GM12878 (cell line): ENCODE measurements at regions of chr2 and their contacts with region 1.

Region 1: GRCh38 chr2:172806493-172806892 is 70.8 kb downstream of the RAPGEF4 start:
- DNase-seq: no peak
- ATAC-seq: peak; percentile 44; the same call in 2 of the 3 replicates
- H3K4me3 ChIP-seq: no peak overlapping the region
- H3K27ac ChIP-seq: no peak overlapping the region
- H3K4me1 ChIP-seq: no peaks in the 10 kb centered on the region
- H3K27me3 ChIP-seq: no peaks in the 10 kb centered on the region; a peak in 1 of 4 replicates
- CTCF ChIP-seq: peak; percentile 66 to 84 (median 80); a peak in 5 of 6 replicates
- EP300 ChIP-seq: no peak
- POLR2A ChIP-seq: no peak
- RAD21 ChIP-seq: peak; percentile 89

Region 2: DNA sequence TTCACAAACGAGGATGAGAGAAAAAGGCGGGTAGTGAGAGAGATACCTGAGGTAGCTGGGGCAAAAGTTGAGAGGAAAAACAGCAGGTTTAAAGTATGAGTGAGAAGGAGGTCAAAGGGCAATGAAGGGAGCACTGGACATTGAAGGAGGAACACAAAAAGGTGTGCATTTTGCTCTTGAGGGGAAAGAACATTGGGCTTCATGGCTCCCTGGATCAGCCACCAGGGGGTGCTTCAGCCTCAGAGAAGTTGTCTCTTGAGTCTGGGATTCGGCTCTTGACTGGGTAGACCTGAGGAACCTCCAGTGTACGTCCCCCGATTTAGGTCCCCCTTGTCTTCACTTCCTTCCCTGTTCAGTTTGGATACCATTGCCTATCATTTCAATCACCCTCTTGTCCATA is 57.7 kb after region 1 on chr2:
- CTCF ChIA-PET with region 1: no interaction called
- POLR2A ChIA-PET with region 1: no interaction called
- RAD21 ChIA-PET with region 1: no interaction called
- SMC1A ChIA-PET with region 1: no interaction called
- in situ Hi-C with region 1: no loop called
- intact Hi-C with region 1: loop called (anchors 2 kb)
- DNase-seq: peak; percentile 3
- ATAC-seq: peak; percentile 86
- H3K4me3 ChIP-seq: no peak overlapping the region
- H3K27ac ChIP-seq: no peak overlapping the region
- H3K4me1 ChIP-seq: no peaks in the 10 kb centered on the region
- H3K27me3 ChIP-seq: peaks cover 0 to 4% of the 10 kb centered on the region in 2 experiments; a peak in 1 of 4 replicates
- CTCF ChIP-seq: peak; percentile 66 to 80 (median 77)
- EP300 ChIP-seq: no peak
- POLR2A ChIP-seq: no peak
- RAD21 ChIP-seq: peak; percentile 83

Region 3: GRCh38 chr2:172921532-172922236 is 115.2 kb after region 1 on chr2:
- CTCF ChIA-PET with region 1: interaction called, 10 read pairs
- POLR2A ChIA-PET with region 1: no interaction called
- RAD21 ChIA-PET with region 1: no interaction called
- SMC1A ChIA-PET with region 1: no interaction called
- in situ Hi-C with region 1: loop called (anchors 25 kb)
- intact Hi-C with region 1: no loop called
- DNase-seq: no peak
- ATAC-seq: no peak
- H3K4me3 ChIP-seq: no peak overlapping the region
- H3K27ac ChIP-seq: no peak overlapping the region
- H3K4me1 ChIP-seq: peaks cover 10% of the 10 kb centered on the region
- H3K27me3 ChIP-seq: no peaks in the 10 kb centered on the region
- CTCF ChIP-seq: no peak
- EP300 ChIP-seq: no peak
- POLR2A ChIP-seq: no peak
- RAD21 ChIP-seq: no peak